Lower leg skin (tissue), 4 donors: ENCODE measurements at regions of chr6 and their contacts with region 1.

Region 1: DNA sequence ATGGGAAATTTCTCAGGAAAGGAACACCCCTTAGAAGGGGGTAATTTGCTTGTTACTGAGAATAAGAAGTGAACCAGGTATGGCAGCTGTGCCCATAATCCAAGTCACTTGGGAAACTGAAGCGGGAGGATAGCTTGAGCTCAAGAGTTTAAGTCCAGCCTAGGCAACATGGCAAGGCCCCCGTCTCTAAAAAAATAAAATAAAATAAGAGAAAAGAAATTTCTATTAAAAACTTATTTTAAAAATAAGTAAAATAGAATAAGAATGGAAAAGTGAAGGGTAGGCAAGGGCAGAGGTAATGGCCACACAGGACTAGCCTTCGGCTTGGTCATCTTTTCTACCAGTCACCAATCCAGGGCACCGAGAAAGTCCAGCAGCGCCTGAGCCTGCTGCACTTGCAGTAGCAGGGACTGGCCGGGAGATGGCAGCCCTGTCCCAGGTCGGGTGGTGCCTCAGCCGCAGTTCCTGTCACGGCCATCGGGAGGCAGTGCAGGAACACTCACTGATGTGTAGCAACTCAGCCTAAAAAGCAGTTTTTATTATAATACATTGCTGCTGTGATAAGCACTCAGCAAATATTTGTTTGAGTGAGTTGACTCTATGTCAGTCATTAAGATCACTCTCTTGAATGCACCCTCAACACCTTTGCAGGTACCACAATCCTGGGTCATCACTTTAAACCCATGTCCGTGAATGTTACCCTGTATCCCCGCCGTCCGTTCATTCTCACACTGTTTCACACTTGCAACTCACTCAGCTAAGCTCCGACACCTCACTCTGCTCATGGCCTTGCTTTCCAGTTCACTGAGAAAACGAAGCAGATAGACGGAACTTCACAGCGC is 23.2 kb upstream of the GCM1 start:
- DNase-seq: peak; percentile 80 to 97
- H3K4me3 ChIP-seq: no peak overlapping the region
- CTCF ChIP-seq: peak in 2 of 3 donors; percentile 98 to 100
- POLR2A ChIP-seq: no peak

Region 2: GRCh38 chr6:52976591-52977035 is 195.2 kb before region 1 on chr6:
- intact Hi-C with region 1: no loop called
- DNase-seq: no peak
- H3K4me3 ChIP-seq: no peak overlapping the region
- CTCF ChIP-seq: no peak
- POLR2A ChIP-seq: no peak

Region 3: GRCh38 chr6:53437557-53438202 is 265.9 kb after region 1 on chr6:
- intact Hi-C with region 1: loop called (anchors 5 kb)
- DNase-seq: peak in 1 of 2 donors; percentile 18
- H3K4me3 ChIP-seq: no peak overlapping the region
- CTCF ChIP-seq: no peak
- POLR2A ChIP-seq: no peak

Region 4: GRCh38 chr6:53484476-53485280 is 312.9 kb after region 1 on chr6:
- intact Hi-C with region 1: loop called (anchors 5 kb)
- DNase-seq: peak in 1 of 2 donors; percentile 84
- H3K4me3 ChIP-seq: no peak overlapping the region
- CTCF ChIP-seq: peak in 1 of 3 donors; percentile 84
- POLR2A ChIP-seq: no peak